ENCODE measurements at regions of chr1 and their contacts with region 1.

Region 1: GRCh38 chr1:91165033-91165654 is 143.3 kb upstream of the ZNF644 start:
- DNase-seq: peak; percentile 85
- H3K4me3 Mint-ChIP-seq: no peak overlapping the region
- H3K27ac Mint-ChIP-seq: no peak overlapping the region
- H3K4me1 Mint-ChIP-seq: no peaks in the 10 kb centered on the region
- H3K27me3 Mint-ChIP-seq: no peaks in the 10 kb centered on the region

Region 2: DNA sequence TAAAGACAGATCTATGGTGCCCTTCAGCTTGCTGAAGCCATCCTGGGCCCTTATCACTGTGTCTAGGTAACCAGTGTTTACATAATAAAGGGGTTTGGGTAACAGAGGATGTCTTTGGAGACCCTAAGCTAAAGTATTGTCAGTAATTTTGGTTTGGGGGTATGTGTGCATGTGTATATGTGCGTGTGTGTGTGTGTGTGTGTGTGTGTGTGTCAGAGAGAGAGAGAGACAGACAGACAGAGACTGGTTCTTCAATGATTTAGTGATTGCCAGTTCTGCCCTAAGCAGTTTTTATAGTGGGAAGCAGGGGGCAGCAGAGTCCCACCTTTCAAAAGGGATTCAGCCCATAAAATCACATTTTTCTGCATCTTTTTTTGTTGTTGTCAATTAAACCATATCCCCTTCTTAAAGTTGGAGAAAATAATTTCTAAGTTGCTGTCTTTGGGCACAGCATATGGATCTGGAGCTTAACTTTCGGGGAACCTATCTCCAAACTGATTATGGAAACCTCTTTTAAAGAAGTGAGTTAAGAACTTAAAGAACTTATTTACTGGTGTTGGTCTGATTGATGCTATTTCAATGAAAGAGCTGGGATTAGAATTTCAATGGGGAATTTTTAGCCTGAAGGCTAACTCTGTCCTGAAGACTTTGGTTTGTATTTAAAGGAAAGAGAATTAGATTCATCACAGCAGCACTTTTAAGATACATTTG is 1119.1 kb before region 1 on chr1:
- CTCF ChIA-PET with region 1: interaction called, 3 read pairs
- intact Hi-C with region 1: loop called (anchors 2 kb)
- DNase-seq: peak; percentile 55
- H3K4me3 Mint-ChIP-seq: no peak overlapping the region
- H3K27ac Mint-ChIP-seq: no peak overlapping the region
- H3K4me1 Mint-ChIP-seq: no peaks in the 10 kb centered on the region
- H3K27me3 Mint-ChIP-seq: no peaks in the 10 kb centered on the region

Region 3: GRCh38 chr1:90133133-90133532 is 1032.0 kb before region 1 on chr1:
- CTCF ChIA-PET with region 1: no interaction called
- intact Hi-C with region 1: loop called (anchors 5 kb)
- DNase-seq: peak; percentile 31
- H3K4me3 Mint-ChIP-seq: no peak overlapping the region
- H3K27ac Mint-ChIP-seq: no peak overlapping the region
- H3K4me1 Mint-ChIP-seq: no peaks in the 10 kb centered on the region
- H3K27me3 Mint-ChIP-seq: peaks cover 15% of the 10 kb centered on the region

Region 4: GRCh38 chr1:90721210-90722194 is 443.6 kb before region 1 on chr1:
- CTCF ChIA-PET with region 1: interaction called, 13 read pairs
- intact Hi-C with region 1: loop called (anchors 1 kb)
- DNase-seq: peak; percentile 72
- H3K4me3 Mint-ChIP-seq: no peak overlapping the region
- H3K27ac Mint-ChIP-seq: no peak overlapping the region
- H3K4me1 Mint-ChIP-seq: peaks cover 58% of the 10 kb centered on the region
- H3K27me3 Mint-ChIP-seq: peaks cover 83% of the 10 kb centered on the region

Region 5: GRCh38 chr1:90964444-90965035 is 200.6 kb before region 1 on chr1:
- CTCF ChIA-PET with region 1: no interaction called
- intact Hi-C with region 1: loop called (anchors 10 kb)
- DNase-seq: no peak
- H3K4me3 Mint-ChIP-seq: no peak overlapping the region
- H3K27ac Mint-ChIP-seq: no peak overlapping the region
- H3K4me1 Mint-ChIP-seq: peaks cover 40% of the 10 kb centered on the region
- H3K27me3 Mint-ChIP-seq: no peaks in the 10 kb centered on the region

Region 6: DNA sequence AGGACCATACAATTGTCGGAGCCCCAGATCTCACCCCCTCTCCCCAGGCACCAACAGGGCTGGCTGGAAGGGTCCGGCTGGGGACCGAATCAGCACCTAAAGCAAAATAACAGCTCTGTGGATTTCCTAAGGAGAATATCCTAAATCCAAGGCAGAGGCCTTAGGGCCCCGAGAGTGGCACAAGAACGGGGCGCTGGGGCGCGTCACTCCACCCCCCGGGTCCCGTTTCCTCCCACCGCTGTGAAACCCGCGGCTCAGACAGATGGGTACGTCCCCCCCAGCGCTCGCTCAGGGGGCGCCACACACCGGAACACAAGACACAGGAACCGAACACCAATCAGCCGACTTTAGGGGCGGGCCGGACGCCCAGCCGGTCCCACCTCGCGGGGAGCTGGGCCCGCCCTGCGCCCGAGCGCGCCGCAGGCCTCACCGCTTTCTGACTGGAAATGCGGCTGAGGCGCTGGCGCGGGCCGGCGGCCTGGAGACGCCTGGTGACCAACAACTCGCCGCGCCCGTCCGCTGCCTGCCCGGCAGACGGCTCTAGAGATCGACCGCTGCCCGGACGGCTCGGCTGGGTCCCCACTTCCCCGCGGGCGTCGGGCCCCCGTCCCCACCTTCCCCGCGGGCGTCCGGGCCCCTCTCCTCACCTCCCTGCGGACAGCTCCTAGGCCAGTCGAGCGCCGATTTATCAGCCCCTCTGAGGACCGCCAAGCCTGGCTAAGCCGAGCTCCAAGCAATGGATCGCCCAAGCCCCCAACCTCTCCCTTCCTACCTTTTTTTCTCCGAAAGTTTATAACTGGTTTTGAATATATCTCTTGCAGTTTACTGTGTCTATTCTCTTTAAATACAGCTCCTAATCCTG is 239.2 kb after region 1 on chr1 and contains the start of gene HFM1:
- CTCF ChIA-PET with region 1: interaction called, 6 read pairs
- intact Hi-C with region 1: loop called (anchors 1 kb)
- DNase-seq: peak; percentile 63
- H3K4me3 Mint-ChIP-seq: peak within 1 kb of the TSS; percentile 72
- H3K27ac Mint-ChIP-seq: no peak within 1 kb of the TSS
- H3K4me1 Mint-ChIP-seq: peaks cover 2% of the 10 kb centered on the region
- H3K27me3 Mint-ChIP-seq: peaks cover 42% of the 10 kb centered on the region
- total RNA-seq, gene HFM1: not detected

Measured in activated naive CD4-positive, alpha-beta T cell treated with anti-CD3 and anti-CD28 coated beads for 36 hours (primary cell).